PC-9 (cell line): ENCODE measurements at regions of chr4 and their contacts with region 1.

Region 1: DNA sequence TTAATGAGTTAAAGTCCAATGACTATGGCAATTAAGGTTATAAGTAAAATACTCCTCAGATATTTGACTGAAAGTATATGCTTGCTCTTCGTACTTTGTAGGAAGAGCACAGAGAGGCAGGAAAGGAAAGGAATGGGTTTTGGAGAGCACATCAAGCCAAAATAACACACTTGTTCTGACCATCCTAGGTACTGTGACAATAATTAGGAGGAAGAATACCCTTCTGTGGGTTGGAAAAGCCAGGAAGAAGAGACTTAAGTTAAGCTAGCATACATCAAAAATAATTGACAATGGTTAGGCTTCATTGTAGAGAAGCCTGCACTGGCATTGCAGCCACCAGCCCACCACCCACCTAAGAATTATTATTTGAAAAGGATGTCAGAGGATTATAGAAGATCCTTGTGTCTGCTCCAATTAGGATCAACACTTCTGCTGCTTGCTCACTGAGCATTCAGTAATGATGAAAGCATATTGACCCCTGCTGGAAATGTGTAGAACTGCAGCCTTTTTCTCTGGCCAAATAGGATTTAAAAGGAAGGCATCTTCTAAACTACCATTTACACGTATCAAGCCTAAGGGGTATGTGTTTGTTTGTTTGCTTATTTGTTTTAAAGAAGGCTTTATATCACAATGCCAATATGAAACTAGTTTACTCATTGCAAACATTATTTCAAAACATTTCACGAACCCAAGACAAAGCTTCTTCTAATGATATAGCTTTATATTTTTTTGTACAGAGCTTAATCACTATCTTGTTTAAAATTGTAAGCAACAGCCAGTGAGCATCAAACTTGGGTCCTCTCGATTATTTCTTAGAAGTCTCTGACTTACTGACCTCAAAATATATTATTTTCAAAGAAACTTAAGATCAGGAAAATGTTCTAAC is 286.2 kb upstream of the TET2 start:
- DNase-seq: peak; percentile 31 to 43
- H3K4me3 ChIP-seq: no peak overlapping the region
- H3K27ac ChIP-seq: no peak overlapping the region
- H3K4me1 ChIP-seq: no peaks in the 10 kb centered on the region
- H3K27me3 ChIP-seq: no peaks in the 10 kb centered on the region
- CTCF ChIP-seq: peak; percentile 87

Region 2: DNA sequence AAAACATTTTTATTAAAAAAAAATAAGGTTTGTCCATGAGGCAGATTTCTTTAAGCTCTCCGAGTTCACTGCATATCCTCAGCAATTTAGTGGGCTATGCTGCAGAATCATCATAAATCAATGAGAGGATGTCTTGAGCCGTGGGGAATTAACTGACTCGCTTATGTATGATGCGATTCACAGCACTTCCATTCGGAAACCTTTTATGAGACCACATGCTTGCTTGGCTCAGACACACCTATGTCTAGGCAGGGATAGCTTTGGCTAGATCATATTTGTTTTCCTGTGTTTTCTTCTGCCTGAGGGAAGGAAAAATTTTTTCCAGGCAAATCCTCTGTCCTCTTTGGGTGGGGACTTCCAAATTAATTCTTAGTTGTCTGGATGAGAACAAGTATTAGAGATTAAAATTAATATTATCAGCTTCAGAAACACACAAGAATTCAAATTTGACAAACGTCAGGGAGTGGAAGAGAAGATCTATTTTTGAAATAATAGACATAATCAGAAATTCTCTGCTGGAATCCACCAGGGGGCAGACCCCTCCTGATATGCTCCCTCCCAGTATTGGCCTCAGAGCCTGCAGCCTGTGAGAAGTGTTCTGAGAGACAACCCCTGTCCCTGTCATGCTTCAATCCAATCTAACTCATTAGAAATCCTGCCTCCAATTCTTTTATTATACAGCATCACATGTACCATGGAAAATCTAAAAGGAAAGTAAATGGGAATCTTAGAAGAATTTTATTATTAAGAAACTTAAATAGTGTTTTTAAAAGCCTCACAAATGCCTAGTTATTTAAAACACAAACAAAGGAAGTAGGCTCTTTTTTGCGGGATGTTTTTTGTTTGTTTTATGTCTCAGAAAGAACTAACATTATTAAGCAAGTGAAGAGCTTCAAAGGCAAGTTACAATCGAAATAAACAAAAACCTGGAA is 795.6 kb before region 1 on chr4:
- CTCF ChIA-PET with region 1: no interaction called
- POLR2A ChIA-PET with region 1: no interaction called
- intact Hi-C with region 1: loop called (anchors 1 kb)
- DNase-seq: peak in 1 of 2 experiments; percentile 11
- H3K4me3 ChIP-seq: no peak overlapping the region
- H3K27ac ChIP-seq: no peak overlapping the region
- H3K4me1 ChIP-seq: no peaks in the 10 kb centered on the region
- H3K27me3 ChIP-seq: no peaks in the 10 kb centered on the region
- CTCF ChIP-seq: peak; percentile 61

Region 3: GRCh38 chr4:104693599-104694201 is 166.8 kb before region 1 on chr4:
- CTCF ChIA-PET with region 1: no interaction called
- POLR2A ChIA-PET with region 1: no interaction called
- intact Hi-C with region 1: loop called (anchors 10 kb)
- DNase-seq: no peak
- H3K4me3 ChIP-seq: no peak overlapping the region
- H3K27ac ChIP-seq: no peak overlapping the region
- H3K4me1 ChIP-seq: no peaks in the 10 kb centered on the region
- H3K27me3 ChIP-seq: no peaks in the 10 kb centered on the region
- CTCF ChIP-seq: peak; percentile 64

Region 4: DNA sequence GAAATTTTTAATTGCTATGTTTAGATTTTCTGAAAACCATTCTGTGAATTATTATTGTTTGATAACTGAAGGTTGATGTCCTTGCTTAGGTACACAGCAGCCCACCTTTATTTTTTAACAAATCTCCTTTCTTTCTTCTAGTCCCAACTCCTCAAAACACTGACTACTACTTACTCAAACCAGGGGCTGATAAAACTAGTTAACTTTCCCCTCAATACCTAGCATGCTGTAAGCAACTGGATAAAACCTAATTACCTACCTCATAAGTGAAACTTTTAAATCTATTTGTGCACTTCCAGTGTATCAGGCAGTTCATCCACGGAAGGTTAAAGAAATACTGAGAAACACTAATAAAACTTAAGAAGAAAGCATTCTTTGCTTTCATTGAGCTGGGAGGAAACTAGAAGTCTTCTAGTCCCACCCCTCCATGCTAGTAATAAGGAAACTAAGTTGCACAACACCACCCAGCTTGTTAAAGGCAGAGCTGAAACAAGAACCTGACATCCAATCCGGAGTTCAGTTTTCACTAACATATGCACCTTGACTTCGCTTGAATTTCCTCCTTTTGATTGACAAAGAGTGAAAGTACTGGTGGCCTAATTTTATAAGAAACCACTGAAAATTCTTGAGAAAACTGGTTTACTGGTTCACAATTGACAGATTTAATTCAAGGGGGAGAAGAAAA is 106.0 kb after region 1 on chr4:
- CTCF ChIA-PET with region 1: no interaction called
- POLR2A ChIA-PET with region 1: no interaction called
- intact Hi-C with region 1: loop called (anchors 10 kb)
- DNase-seq: peak; percentile 2 to 62
- H3K4me3 ChIP-seq: no peak overlapping the region; the same call in 1 of the 2 replicates
- H3K27ac ChIP-seq: peak overlapping the region; percentile 79
- H3K4me1 ChIP-seq: peaks cover 20% of the 10 kb centered on the region
- H3K27me3 ChIP-seq: no peaks in the 10 kb centered on the region
- CTCF ChIP-seq: no peak

Region 5: GRCh38 chr4:105679186-105679585 is 818.7 kb after region 1 on chr4:
- CTCF ChIA-PET with region 1: no interaction called
- POLR2A ChIA-PET with region 1: no interaction called
- intact Hi-C with region 1: no loop called
- DNase-seq: peak in 1 of 2 experiments; percentile 37
- H3K4me3 ChIP-seq: no peak overlapping the region
- H3K27ac ChIP-seq: no peak overlapping the region
- H3K4me1 ChIP-seq: peaks cover 14% of the 10 kb centered on the region
- H3K27me3 ChIP-seq: no peaks in the 10 kb centered on the region
- CTCF ChIP-seq: no peak